ENCODE measurements at regions of chr9 and their contacts with region 1.

Region 1: DNA sequence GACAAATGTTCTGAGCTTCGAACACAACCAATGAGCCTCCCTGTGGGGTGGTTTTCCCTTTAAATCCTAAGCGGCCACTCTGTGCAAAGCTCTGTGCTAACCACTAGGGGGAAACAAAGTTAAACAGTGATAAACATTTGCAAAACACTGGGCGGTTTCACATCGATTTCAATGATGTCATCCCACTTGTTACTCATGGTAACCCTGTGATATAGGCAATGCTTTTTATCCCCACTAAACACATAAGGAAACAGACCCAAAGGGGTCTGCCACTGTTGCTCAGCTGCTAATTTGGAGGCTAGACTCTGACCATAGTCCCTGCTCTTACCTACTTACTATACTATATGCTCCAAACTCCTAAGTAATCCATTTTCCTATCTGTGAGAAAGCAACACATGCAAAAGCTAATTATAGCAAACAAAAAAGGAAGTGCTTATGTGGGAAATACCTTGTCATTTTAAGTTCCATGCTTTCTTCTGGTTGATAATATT is 57.3 kb downstream of the PTPN3 start:
- DNase-seq: peak in 8 of 9 donors; percentile 8 to 60 (median 42)
- ATAC-seq: peak; percentile 79
- H3K4me3 ChIP-seq: no peak overlapping the region
- H3K4me3 Mint-ChIP-seq: peak overlapping the region in 6 of 10 donors; percentile 5 to 56 (median 22)
- H3K27ac ChIP-seq: no peak overlapping the region
- H3K27ac Mint-ChIP-seq: peak overlapping the region in 1 of 9 donors; percentile 87
- H3K4me1 ChIP-seq: peaks cover 0 to 4% of the 10 kb centered on the region in 2 donors
- H3K4me1 Mint-ChIP-seq: peaks cover 7 to 21% (median 15%) of the 10 kb centered on the region in 7 donors
- H3K27me3 ChIP-seq: no peaks in the 10 kb centered on the region
- H3K27me3 Mint-ChIP-seq: peaks cover 5 to 30% (median 16%) of the 10 kb centered on the region in 5 donors

Region 2: DNA sequence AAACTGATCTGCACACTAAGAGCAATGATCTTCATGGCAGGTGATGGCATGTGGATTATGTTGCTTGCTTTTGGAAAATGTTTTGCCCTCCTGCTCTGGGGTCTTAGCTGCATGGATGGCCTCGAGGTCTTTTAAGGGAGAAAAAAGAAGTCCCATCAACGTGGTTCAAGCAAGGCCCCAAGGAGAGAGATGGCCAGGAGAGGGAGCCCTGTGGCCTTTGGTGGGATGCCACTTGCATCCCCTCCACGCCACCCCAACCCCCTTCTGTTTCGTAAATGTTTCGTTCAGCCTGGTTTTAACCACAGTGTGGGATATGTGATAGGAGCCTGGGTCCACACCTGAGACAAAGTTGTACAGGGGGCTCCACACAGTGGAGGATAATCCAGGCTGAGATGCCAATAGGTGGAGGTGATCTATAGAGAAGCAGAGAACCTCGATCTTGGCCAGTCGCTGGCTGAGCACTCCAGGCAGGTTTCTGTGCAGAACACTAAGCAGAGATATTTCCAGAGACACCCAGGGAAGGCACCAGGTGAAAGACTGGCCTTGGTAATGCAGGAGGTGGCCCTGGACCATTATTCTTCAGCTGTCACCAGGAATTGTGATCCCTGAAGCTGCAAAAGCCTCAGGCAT is 248.0 kb before region 1 on chr9:
- CTCF ChIA-PET with region 1: no interaction called
- POLR2A ChIA-PET with region 1: no interaction called
- intact Hi-C with region 1: no loop called
- DNase-seq: no peak
- ATAC-seq: no peak
- H3K4me3 ChIP-seq: no peak overlapping the region
- H3K4me3 Mint-ChIP-seq: no peak overlapping the region
- H3K27ac ChIP-seq: no peak overlapping the region
- H3K27ac Mint-ChIP-seq: no peak overlapping the region
- H3K4me1 ChIP-seq: no peaks in the 10 kb centered on the region
- H3K4me1 Mint-ChIP-seq: peaks cover 0 to 4% (median 0%) of the 10 kb centered on the region in 7 donors
- H3K27me3 ChIP-seq: no peaks in the 10 kb centered on the region
- H3K27me3 Mint-ChIP-seq: peaks cover 0 to 11% (median 0%) of the 10 kb centered on the region in 5 donors

Region 3: DNA sequence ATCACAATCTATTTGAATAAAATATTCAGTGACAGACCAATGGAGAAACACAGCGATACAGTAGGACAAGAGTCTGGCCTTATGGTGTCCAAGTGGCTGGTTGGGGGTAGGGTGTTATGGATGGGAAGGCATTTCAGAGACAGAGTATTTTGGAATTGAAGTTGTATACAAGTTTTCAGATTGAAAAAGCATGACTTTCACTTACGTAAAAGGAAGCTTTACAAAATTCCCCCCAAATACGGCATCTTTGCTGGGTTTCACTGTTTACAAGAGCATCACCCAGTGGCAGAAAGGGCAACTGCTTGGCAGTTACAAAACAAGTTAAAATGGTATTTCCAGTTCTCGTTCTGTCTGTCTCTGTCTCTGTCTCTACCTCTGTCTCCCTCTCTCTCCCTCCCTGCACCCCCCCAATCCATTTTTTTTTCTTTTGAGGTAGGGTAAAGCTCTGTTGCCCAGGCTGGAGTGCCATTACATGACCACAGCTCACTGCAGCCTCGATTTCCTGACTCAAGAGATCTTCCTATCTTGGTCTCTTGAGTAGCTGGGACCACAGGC is 29.0 kb before region 1 on chr9:
- CTCF ChIA-PET with region 1: no interaction called
- POLR2A ChIA-PET with region 1: no interaction called
- intact Hi-C with region 1: loop called in 1 of 2 experiments (anchors 1 kb)
- DNase-seq: no peak
- ATAC-seq: no peak
- H3K4me3 ChIP-seq: no peak overlapping the region
- H3K4me3 Mint-ChIP-seq: peak overlapping the region in 1 of 10 donors; percentile 48
- H3K27ac ChIP-seq: no peak overlapping the region
- H3K27ac Mint-ChIP-seq: peak overlapping the region in 1 of 9 donors; percentile 81
- H3K4me1 ChIP-seq: no peaks in the 10 kb centered on the region
- H3K4me1 Mint-ChIP-seq: peaks cover 0 to 53% (median 0%) of the 10 kb centered on the region in 7 donors
- H3K27me3 ChIP-seq: no peaks in the 10 kb centered on the region
- H3K27me3 Mint-ChIP-seq: peaks cover 0 to 21% (median 17%) of the 10 kb centered on the region in 5 donors

Region 4: GRCh38 chr9:109469646-109470358 is 29.0 kb after region 1 on chr9:
- CTCF ChIA-PET with region 1: interaction called, 5 read pairs
- POLR2A ChIA-PET with region 1: no interaction called
- intact Hi-C with region 1: loop called (anchors 1 kb)
- DNase-seq: peak in 8 of 9 donors; percentile 11 to 69 (median 24)
- ATAC-seq: peak; percentile 78
- H3K4me3 ChIP-seq: no peak overlapping the region
- H3K4me3 Mint-ChIP-seq: no peak overlapping the region
- H3K27ac ChIP-seq: no peak overlapping the region
- H3K27ac Mint-ChIP-seq: no peak overlapping the region
- H3K4me1 ChIP-seq: no peaks in the 10 kb centered on the region
- H3K4me1 Mint-ChIP-seq: peaks cover 0 to 38% (median 0%) of the 10 kb centered on the region in 7 donors
- H3K27me3 ChIP-seq: no peaks in the 10 kb centered on the region
- H3K27me3 Mint-ChIP-seq: peaks cover 4 to 46% (median 16%) of the 10 kb centered on the region in 5 donors

Region 5: GRCh38 chr9:109498195-109499092 is 57.6 kb after region 1 on chr9 and contains the start of gene PTPN3:
- CTCF ChIA-PET with region 1: no interaction called
- POLR2A ChIA-PET with region 1: no interaction called
- intact Hi-C with region 1: no loop called
- DNase-seq: peak in 1 of 9 donors; percentile 32
- ATAC-seq: no peak
- H3K4me3 ChIP-seq: no peak within 1 kb of the TSS
- H3K4me3 Mint-ChIP-seq: peak within 1 kb of the TSS in 6 of 10 donors; percentile 15 to 44 (median 24)
- H3K27ac ChIP-seq: no peak within 1 kb of the TSS
- H3K27ac Mint-ChIP-seq: no peak within 1 kb of the TSS
- H3K4me1 ChIP-seq: no peaks in the 10 kb centered on the region
- H3K4me1 Mint-ChIP-seq: peaks cover 7 to 13% (median 8%) of the 10 kb centered on the region in 7 donors
- H3K27me3 ChIP-seq: peaks cover 0 to 4% of the 10 kb centered on the region in 2 donors
- H3K27me3 Mint-ChIP-seq: peaks cover 58 to 82% (median 63%) of the 10 kb centered on the region in 5 donors
- total RNA-seq, gene PTPN3: 0.89 TPM in 1 of 5 experiments, not detected in the others

Region 6: GRCh38 chr9:109520478-109521132 is 79.8 kb after region 1 on chr9:
- CTCF ChIA-PET with region 1: no interaction called
- POLR2A ChIA-PET with region 1: no interaction called
- intact Hi-C with region 1: loop called in 1 of 2 experiments (anchors 1 kb)
- DNase-seq: peak in 2 of 9 donors; percentile 7 to 50
- ATAC-seq: peak; percentile 50
- H3K4me3 ChIP-seq: no peak overlapping the region
- H3K4me3 Mint-ChIP-seq: no peak overlapping the region
- H3K27ac ChIP-seq: no peak overlapping the region
- H3K27ac Mint-ChIP-seq: no peak overlapping the region
- H3K4me1 ChIP-seq: no peaks in the 10 kb centered on the region
- H3K4me1 Mint-ChIP-seq: peaks cover 0 to 2% (median 0%) of the 10 kb centered on the region in 7 donors
- H3K27me3 ChIP-seq: no peaks in the 10 kb centered on the region
- H3K27me3 Mint-ChIP-seq: peaks cover 0 to 19% (median 13%) of the 10 kb centered on the region in 5 donors

Region 7: GRCh38 chr9:110058304-110058953 is 617.6 kb after region 1 on chr9:
- CTCF ChIA-PET with region 1: no interaction called
- POLR2A ChIA-PET with region 1: no interaction called
- intact Hi-C with region 1: loop called in 1 of 2 experiments (anchors 10 kb)
- DNase-seq: peak; percentile 16 to 63 (median 47)
- ATAC-seq: peak; percentile 68
- H3K4me3 ChIP-seq: no peak overlapping the region
- H3K4me3 Mint-ChIP-seq: peak overlapping the region in 2 of 10 donors; percentile 9 to 18
- H3K27ac ChIP-seq: no peak overlapping the region
- H3K27ac Mint-ChIP-seq: peak overlapping the region in 1 of 9 donors; percentile 66
- H3K4me1 ChIP-seq: no peaks in the 10 kb centered on the region
- H3K4me1 Mint-ChIP-seq: peaks cover 0 to 54% (median 8%) of the 10 kb centered on the region in 7 donors
- H3K27me3 ChIP-seq: no peaks in the 10 kb centered on the region
- H3K27me3 Mint-ChIP-seq: peaks cover 0 to 4% (median 0%) of the 10 kb centered on the region in 5 donors

Region 8: GRCh38 chr9:110623462-110624025 is 1182.7 kb after region 1 on chr9:
- CTCF ChIA-PET with region 1: no interaction called
- POLR2A ChIA-PET with region 1: no interaction called
- intact Hi-C with region 1: loop called in 1 of 2 experiments (anchors 10 kb)
- DNase-seq: peak in 3 of 9 donors; percentile 3 to 16 (median 5)
- ATAC-seq: no peak
- H3K4me3 ChIP-seq: no peak overlapping the region
- H3K4me3 Mint-ChIP-seq: peak overlapping the region in 1 of 10 donors; percentile 42
- H3K27ac ChIP-seq: no peak overlapping the region
- H3K27ac Mint-ChIP-seq: no peak overlapping the region
- H3K4me1 ChIP-seq: no peaks in the 10 kb centered on the region
- H3K4me1 Mint-ChIP-seq: no peaks in the 10 kb centered on the region
- H3K27me3 ChIP-seq: no peaks in the 10 kb centered on the region
- H3K27me3 Mint-ChIP-seq: no peaks in the 10 kb centered on the region